ENCODE measurements at regions of chr7 and their contacts with region 1.

Region 1: DNA sequence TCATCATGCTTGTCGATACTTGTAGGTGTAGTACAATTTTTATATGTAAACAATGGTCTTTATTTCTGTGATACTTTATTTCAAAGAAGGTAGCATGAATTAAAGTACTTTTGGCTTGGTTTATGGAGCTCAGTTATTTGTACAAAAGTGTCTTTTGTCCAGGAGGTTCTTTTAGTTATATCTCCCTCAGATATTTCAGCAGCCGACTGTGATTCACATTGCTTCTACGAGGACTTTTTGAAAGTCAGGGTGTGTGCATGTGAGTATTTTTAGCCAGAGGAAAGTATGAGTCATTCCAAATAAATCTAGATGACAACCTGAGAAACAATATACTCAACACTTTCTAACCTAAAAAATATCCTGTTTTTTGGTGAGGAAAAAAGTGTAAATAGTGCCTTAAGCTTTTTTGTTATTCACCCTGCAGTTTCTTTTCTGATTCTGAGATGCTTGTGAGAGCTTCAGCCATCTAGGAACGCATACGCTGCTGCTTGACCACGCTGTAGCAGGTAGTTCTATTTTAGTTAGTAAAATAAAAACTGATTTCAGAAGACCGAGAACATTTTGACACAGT is 595 bp upstream of the SUN1 start:
- DNase-seq: peak in 6 of 7 donors; percentile 53 to 78 (median 67)
- H3K4me3 ChIP-seq: peak overlapping the region in 1 of 4 donors; percentile 48
- H3K27ac ChIP-seq: peak overlapping the region; percentile 73 to 90 (median 83)
- H3K4me1 ChIP-seq: peaks cover 17 to 48% of the 10 kb centered on the region in 2 donors
- H3K27me3 ChIP-seq: no peaks in the 10 kb centered on the region
- CTCF ChIP-seq: no peak
- POLR2A ChIP-seq: peak in 1 of 2 donors; percentile 80

Region 2: GRCh38 chr7:867672-868486 is 36.2 kb after region 1 on chr7:
- intact Hi-C with region 1: loop called in 1 of 2 experiments (anchors 5 kb)
- DNase-seq: peak in 3 of 7 donors; percentile 59 to 82 (median 66)
- H3K4me3 ChIP-seq: no peak overlapping the region
- H3K27ac ChIP-seq: peak overlapping the region in 3 of 5 donors; percentile 7 to 87 (median 82)
- H3K4me1 ChIP-seq: peaks cover 0 to 15% of the 10 kb centered on the region in 2 donors
- H3K27me3 ChIP-seq: no peaks in the 10 kb centered on the region
- CTCF ChIP-seq: no peak
- POLR2A ChIP-seq: no peak

Measured in adrenal gland (tissue), 19 donors.